ENCODE measurements at regions of chr3 and their contacts with region 1.

Region 1: GRCh38 chr3:190721330-190721729 is 141.2 kb downstream of the GMNC start:
- DNase-seq: no peak
- ATAC-seq: no peak
- H3K4me3 ChIP-seq: no peak overlapping the region
- H3K27ac ChIP-seq: no peak overlapping the region
- H3K4me1 ChIP-seq: no peaks in the 10 kb centered on the region
- H3K27me3 ChIP-seq: no peaks in the 10 kb centered on the region
- CTCF ChIP-seq: no peak
- EP300 ChIP-seq: no peak
- POLR2A ChIP-seq: no peak
- RAD21 ChIP-seq: no peak

Region 2: DNA sequence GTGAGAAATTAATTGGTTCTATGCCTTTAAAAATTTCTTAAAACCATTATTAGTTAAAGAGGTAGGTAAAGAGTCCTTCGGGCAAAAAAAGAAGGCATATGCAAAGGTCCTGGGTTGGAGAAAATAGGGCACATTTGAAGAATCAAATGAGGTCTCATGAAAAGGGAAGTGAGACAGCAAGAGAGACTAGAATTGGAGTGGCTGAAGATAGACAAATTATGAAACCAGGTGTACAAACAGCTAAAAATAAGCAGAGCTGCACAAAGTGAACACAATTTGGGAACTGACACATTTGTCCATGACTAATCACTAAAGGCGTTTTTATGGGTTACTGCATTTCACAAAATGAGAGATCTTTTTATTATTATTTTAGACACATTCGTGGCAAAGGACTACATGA is 1320.8 kb after region 1 on chr3:
- CTCF ChIA-PET with region 1: no interaction called
- POLR2A ChIA-PET with region 1: no interaction called
- in situ Hi-C with region 1: no loop called
- intact Hi-C with region 1: loop called (anchors 5 kb)
- DNase-seq: no peak
- ATAC-seq: no peak
- H3K4me3 ChIP-seq: no peak overlapping the region
- H3K27ac ChIP-seq: no peak overlapping the region
- H3K4me1 ChIP-seq: no peaks in the 10 kb centered on the region
- H3K27me3 ChIP-seq: no peaks in the 10 kb centered on the region
- CTCF ChIP-seq: no peak
- EP300 ChIP-seq: no peak
- POLR2A ChIP-seq: no peak
- RAD21 ChIP-seq: no peak